H1 (cell line): ENCODE measurements at regions of chr22 and their contacts with region 1.

Region 1: DNA sequence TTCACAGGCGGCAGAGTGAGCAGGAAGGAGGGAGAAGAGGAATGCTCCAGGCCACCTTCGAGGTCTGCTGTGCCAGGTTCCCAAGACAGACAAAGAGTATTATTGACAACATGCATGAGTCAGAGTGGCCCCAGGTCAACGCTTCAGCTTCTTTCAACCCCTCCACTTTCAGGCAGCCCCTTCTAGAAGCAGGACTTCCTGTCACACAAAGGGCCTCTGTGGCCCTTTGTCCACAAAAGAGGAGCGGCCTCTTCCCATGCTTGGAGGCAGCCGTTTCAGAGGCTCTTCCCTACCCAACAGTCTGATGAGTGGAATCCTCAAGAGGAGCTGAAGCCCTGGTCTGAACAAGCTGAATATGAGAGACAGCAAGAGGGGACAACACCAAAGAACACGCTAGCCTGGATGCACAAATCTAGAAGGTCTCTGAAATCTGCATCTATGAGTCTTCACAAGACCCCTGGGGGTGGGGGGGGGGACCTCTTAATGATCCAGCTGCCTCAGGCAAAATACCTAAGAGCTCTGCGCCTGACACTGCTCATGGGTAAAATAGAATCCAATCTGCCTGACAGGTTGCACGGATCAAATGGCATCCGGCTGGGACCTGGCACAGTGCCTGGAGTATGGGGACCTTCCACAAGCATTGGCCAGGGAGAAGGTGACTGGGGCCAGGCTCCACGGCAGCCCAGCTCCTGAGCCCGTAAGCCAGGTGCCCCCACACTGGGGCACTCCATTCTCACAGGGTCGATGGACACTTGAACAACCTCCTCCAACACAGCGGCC is 67.5 kb downstream of the PACSIN2 start:
- DNase-seq: no peak
- H3K4me3 ChIP-seq: no peak overlapping the region
- H3K27ac ChIP-seq: no peak overlapping the region
- H3K4me1 ChIP-seq: peaks cover 0 to 15% (median 7%) of the 10 kb centered on the region in 4 experiments; a peak in 6 of 7 replicates
- H3K27me3 ChIP-seq: no peaks in the 10 kb centered on the region
- CTCF ChIP-seq: no peak
- EP300 ChIP-seq: no peak
- POLR2A ChIP-seq: no peak
- RAD21 ChIP-seq: no peak

Region 2: DNA sequence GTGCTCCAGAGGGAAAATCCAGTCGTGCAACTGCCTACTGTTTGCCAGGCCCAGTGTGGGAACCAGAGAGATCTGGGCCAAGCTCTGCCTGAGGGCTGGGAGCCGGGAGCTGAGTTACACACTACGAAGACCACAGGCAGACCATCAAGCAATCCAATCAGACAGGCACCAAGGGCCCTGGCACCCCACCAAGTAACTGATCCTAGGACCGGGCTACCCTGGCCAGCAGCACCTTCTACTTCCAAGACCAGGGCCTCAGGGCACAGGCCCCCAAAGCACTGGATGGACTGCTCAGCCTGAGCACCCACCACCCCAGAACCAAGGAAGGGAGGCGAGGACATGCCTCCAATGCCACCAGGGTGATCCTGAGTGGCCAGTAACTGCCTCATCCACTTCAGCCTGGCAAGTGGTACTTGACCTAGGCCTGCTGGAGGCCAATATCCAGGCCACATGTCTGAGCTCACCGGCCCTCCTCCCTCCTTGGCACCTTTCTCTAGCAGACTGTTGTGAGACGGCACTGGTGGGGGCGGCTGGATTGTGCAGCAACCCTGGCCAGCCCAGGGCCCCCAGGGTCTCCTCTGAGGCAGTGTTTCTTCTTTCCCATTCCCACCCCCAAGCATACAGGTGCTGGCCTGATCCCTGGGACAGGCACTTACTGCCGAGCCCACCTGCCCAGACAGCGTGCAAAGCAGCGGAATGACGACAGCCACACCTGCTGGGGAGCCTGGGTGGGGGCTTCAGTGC is 69.6 kb before region 1 on chr22:
- CTCF ChIA-PET with region 1: no interaction called
- POLR2A ChIA-PET with region 1: no interaction called
- DNase-seq: no peak
- H3K4me3 ChIP-seq: no peak overlapping the region
- H3K27ac ChIP-seq: no peak overlapping the region; the same call in 1 of the 2 replicates
- H3K4me1 ChIP-seq: peaks cover 0 to 7% (median 4%) of the 10 kb centered on the region in 4 experiments; a peak in 6 of 7 replicates
- H3K27me3 ChIP-seq: no peaks in the 10 kb centered on the region
- CTCF ChIP-seq: no peak
- EP300 ChIP-seq: no peak
- POLR2A ChIP-seq: no peak
- RAD21 ChIP-seq: no peak

Region 3: GRCh38 chr22:42930810-42931420 is 16.5 kb before region 1 on chr22:
- CTCF ChIA-PET with region 1: interaction called, 12 read pairs
- POLR2A ChIA-PET with region 1: interaction called, 11 read pairs
- DNase-seq: no peak
- H3K4me3 ChIP-seq: no peak overlapping the region
- H3K27ac ChIP-seq: no peak overlapping the region
- H3K4me1 ChIP-seq: peaks cover 0 to 3% (median 0%) of the 10 kb centered on the region in 4 experiments; a peak in 3 of 7 replicates
- H3K27me3 ChIP-seq: no peaks in the 10 kb centered on the region
- CTCF ChIP-seq: peak in 2 of 3 experiments; percentile 17 to 19; a peak in 2 of 4 replicates
- EP300 ChIP-seq: no peak
- POLR2A ChIP-seq: no peak
- RAD21 ChIP-seq: peak; percentile 21 to 46; a peak in 3 of 4 replicates